ENCODE measurements at regions of chr5 and their contacts with region 1.

Region 1: DNA sequence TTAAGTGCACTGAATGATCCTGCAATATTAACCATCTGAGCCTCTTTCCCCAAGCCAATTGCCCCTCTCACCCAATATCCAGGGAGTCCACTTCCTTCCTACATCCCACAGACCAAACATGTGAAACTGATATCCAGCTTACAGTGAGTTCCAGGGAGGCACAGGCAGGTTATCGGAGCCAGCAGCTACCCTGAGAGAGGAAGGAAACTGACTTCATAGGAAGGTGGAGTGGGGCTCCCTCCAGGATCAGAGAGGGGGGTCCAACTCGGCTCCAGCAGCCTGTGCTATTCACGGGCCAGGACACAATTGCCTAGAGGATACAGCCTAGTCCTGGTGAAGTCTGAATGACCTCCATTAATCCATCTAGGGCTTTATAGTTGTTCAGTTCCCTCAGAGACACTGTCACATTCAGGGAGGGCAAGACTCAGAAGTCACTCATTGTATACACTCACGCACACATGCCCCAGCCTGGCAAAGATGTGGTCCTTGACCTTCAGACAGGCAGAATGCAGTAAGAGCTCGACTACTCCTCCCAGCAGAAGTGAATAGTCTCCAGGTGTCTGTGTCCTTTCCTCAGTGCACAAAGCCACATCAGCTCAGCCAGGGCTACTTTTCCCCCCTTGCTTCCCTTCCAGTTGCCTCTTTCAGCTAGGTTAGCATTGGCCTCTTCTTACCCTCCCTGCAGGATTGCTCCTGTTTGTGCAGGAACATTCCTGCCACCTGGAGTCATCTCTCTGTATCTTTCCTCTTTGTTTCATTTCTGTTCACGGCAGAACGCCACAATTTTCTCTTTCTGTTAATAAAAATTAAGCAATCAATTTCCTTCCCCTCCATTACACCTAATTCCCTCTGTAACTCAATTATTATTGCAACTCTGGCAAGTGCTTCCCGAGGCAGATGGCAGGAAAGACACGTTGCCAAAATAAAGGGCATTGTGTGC is 501.7 kb downstream of the ARHGEF28 start:
- DNase-seq: peak; percentile 55
- ATAC-seq: peak; percentile 72
- H3K4me3 ChIP-seq: peak overlapping the region; percentile 63
- H3K27ac ChIP-seq: no peak overlapping the region
- H3K4me1 ChIP-seq: peaks cover 21% of the 10 kb centered on the region
- H3K27me3 ChIP-seq: no peaks in the 10 kb centered on the region
- CTCF ChIP-seq: peak; percentile 51

Region 2: DNA sequence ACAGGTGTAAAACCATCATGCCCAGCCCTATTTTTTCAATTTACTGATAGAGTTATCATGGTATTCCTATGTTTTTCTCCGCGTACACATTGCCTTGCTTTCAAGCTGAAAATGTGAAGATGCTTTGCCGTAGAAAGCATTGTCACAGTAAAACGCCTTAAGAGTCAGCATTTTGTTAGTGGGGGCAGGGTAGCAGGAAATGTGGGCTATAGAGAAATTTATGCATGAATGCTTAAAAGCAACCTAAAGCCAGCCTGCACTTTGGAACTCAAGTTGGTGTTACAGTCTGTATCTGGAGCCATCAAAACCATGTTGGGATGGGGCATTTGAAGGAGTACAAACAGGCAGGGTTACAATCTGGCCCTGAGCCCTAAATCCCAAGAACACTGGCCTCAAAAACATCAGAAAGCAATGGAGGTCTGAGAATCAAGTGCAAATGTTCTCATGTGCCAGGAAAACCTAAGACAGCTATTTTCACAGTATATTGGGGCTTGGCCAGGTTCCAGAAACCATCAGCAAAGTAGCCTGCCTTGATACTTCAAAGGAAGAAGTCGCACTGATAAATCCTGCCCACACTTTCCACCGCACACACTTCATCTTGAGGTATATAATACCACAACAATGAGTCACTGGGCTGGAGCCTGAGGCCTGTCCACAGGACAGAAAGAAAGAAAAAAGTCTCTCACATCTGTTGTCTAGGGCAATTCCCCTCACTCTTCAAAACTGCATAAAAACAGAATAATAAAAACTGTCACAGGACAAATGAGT is 199.1 kb after region 1 on chr5:
- CTCF ChIA-PET with region 1: no interaction called
- POLR2A ChIA-PET with region 1: no interaction called
- intact Hi-C with region 1: loop called (anchors 5 kb)
- DNase-seq: peak; percentile 92
- ATAC-seq: peak; percentile 74
- H3K4me3 ChIP-seq: no peak overlapping the region; the same call in 1 of the 2 replicates
- H3K27ac ChIP-seq: peak overlapping the region; percentile 70
- H3K4me1 ChIP-seq: peaks cover 27% of the 10 kb centered on the region
- H3K27me3 ChIP-seq: no peaks in the 10 kb centered on the region
- CTCF ChIP-seq: no peak

Measured in PC-3 (cell line).